MCF 10A (cell line): ENCODE measurements at regions of chr6 and their contacts with region 1.

Region 1: DNA sequence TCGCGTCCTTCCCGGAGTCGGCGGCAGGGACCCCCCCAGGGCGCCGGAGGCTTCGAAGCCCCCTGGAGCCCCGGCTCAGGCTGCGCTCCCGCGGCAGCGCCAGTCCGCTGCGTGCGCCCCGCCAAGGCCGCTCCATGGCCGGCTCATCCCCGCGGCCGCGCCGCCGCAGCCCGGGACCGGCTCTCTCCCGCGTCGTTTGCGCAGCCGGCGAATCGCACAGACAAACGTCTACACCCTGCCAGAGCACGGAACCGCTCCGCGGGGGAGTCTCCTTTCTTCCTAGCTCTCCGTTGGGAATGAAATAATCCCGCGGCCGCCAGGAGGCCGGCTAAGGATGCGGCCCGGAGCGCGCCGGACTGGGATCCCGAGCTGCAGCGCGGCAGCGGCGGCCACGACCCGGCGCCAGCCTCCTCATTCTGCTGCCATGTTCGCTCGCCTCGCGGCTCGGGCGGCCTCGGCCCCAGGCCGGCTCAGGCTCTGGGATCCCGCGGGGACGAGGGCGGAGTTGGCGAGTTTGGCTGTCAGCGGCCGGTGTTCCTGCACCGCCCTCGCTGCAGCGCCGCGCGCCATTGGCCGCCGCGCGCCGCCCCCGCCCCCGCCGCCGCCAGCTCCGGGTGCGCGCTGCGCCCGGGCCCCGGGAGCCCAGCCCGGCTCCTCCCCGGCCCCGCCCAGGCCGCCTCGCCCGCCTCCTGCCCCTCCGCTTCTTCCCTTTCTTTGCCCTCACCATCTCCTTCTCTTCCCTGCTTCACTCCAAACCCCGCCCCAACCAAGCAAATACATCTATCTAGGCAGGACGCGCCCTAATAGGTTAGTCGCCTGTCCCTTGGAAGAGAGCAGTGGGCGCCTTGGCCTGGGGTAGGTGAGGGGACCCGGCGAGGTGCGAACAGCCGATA is at the start of gene GFOD1:
- DNase-seq: peak; percentile 88
- H3K4me3 Mint-ChIP-seq: peak within 1 kb of the TSS; percentile 78
- H3K27ac Mint-ChIP-seq: peak within 1 kb of the TSS; percentile 50
- H3K4me1 Mint-ChIP-seq: peaks cover 23% of the 10 kb centered on the region
- H3K27me3 Mint-ChIP-seq: no peaks in the 10 kb centered on the region
- CTCF ChIP-seq: peak; percentile 23
- total RNA-seq, gene GFOD1: 7.1 and 9.5 TPM in 2 replicates

Region 2: GRCh38 chr6:13336553-13336952 is 150.8 kb before region 1 on chr6:
- CTCF ChIA-PET with region 1: interaction called, 4 read pairs
- POLR2A ChIA-PET with region 1: interaction called, 14 read pairs
- intact Hi-C with region 1: loop called (anchors 1 kb)
- DNase-seq: peak; percentile 81
- H3K4me3 Mint-ChIP-seq: no peak overlapping the region
- H3K27ac Mint-ChIP-seq: no peak overlapping the region
- H3K4me1 Mint-ChIP-seq: peaks cover 5% of the 10 kb centered on the region
- H3K27me3 Mint-ChIP-seq: no peaks in the 10 kb centered on the region
- CTCF ChIP-seq: peak; percentile 90

Region 3: GRCh38 chr6:13355043-13355951 is 132.1 kb before region 1 on chr6:
- CTCF ChIA-PET with region 1: no interaction called
- POLR2A ChIA-PET with region 1: interaction called, 5 read pairs
- intact Hi-C with region 1: loop called (anchors 5 kb)
- DNase-seq: peak; percentile 69
- H3K4me3 Mint-ChIP-seq: no peak overlapping the region
- H3K27ac Mint-ChIP-seq: peak overlapping the region; percentile 55
- H3K4me1 Mint-ChIP-seq: peaks cover 32% of the 10 kb centered on the region
- H3K27me3 Mint-ChIP-seq: no peaks in the 10 kb centered on the region
- CTCF ChIP-seq: no peak

Region 4: DNA sequence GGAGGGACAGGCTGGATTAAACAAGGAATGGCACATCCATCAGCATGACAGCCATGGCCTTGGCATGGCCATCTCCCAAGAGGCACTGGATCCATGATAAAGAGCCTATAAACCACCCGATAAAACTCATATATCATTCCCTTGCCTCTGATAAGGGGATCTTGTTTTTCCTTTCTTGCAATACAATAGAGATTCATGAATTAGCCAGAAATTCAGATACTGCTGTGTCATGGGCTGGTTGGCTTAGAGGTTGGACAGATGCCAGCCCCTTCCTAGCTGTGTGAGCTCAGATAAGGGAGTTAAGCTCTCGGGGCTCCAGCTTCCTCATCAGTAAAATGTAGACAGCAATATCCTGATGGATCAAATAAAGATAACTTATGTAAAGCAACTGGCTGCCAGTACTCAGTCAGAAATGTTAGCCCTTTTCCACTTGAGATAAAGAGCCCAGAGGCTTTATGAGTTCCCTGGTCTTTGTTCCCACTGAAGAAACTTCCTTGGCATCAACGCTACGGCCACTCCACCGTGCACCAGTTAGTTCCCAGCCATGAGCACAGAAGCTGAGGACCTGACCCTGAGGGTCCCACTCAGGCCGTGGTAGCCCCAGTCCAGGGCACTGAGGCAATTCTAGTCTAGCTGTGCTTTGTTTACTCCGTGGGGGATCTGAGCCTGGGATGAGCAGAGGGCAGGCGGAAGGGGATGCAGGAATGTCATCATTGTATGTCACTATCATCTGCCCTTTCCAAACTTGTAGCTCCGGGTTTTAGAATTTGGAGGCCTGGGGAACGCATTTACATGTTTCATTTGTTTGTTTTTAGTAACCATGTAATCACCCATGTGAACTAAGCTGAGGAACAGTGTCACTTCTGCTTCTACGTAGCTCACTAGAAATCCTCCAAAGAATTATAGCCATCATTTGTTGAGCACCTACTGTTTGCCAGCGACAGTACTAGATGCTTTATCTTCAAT is 91.8 kb before region 1 on chr6:
- CTCF ChIA-PET with region 1: interaction called, 3 read pairs
- POLR2A ChIA-PET with region 1: interaction called, 46 read pairs
- intact Hi-C with region 1: loop called (anchors 1 kb)
- DNase-seq: peak; percentile 75
- H3K4me3 Mint-ChIP-seq: no peak overlapping the region
- H3K27ac Mint-ChIP-seq: peak overlapping the region; percentile 21
- H3K4me1 Mint-ChIP-seq: peaks cover 33% of the 10 kb centered on the region
- H3K27me3 Mint-ChIP-seq: no peaks in the 10 kb centered on the region
- CTCF ChIP-seq: no peak

Region 5: GRCh38 chr6:13407709-13408695 is 79.4 kb before region 1 on chr6:
- CTCF ChIA-PET with region 1: interaction called, 5 read pairs
- POLR2A ChIA-PET with region 1: interaction called, 49 read pairs
- intact Hi-C with region 1: no loop called
- DNase-seq: peak; percentile 99
- H3K4me3 Mint-ChIP-seq: peak overlapping the region; percentile 33
- H3K27ac Mint-ChIP-seq: peak overlapping the region; percentile 85
- H3K4me1 Mint-ChIP-seq: peaks cover 52% of the 10 kb centered on the region
- H3K27me3 Mint-ChIP-seq: no peaks in the 10 kb centered on the region
- CTCF ChIP-seq: no peak

Region 6: DNA sequence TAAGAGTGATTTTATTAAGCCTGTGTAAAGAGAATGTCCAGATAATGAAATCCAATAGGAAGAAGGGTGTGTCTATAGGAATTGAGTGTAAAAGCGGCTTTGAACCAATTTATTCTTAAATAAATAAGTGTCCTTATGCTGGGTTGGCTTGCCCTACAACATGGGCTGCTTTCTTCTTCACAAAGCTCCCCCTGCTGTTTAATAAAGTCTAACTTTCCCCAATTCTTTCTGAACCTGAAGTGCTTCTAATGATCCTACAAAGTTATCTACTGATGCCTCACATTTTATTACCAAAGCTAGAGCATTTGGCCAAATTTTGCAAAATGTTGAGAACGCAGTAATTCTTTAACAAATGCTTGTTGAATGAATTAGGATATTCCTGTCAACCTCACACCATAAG is 50.7 kb after region 1 on chr6:
- CTCF ChIA-PET with region 1: interaction called, 3 read pairs
- POLR2A ChIA-PET with region 1: interaction called, 4 read pairs
- intact Hi-C with region 1: loop called (anchors 5 kb)
- DNase-seq: peak; percentile 58
- H3K4me3 Mint-ChIP-seq: no peak overlapping the region
- H3K27ac Mint-ChIP-seq: no peak overlapping the region
- H3K4me1 Mint-ChIP-seq: no peaks in the 10 kb centered on the region
- H3K27me3 Mint-ChIP-seq: no peaks in the 10 kb centered on the region
- CTCF ChIP-seq: peak; percentile 35